H1 (cell line): ENCODE measurements at regions of chr14 and their contacts with region 1.

Region 1: DNA sequence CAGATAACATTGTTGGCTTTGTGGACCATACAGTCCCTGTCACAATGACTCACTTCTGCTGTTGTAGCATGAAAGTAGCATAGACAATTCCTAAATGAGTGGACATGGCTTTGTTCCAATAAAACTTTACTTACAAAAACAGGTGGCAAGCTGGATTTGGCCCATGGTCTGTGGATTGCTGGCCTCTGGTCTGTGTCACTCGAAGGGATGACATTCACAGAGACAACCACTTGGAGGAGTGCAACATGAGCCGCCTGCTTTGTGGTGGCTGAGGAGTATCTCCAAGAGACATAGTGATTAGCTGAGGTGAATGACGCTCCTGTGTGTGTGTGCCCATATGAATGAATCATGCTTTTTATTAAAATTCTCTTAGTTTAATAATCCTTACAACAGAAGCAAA is 81.3 kb upstream of the NRXN3 start:
- DNase-seq: no peak
- H3K4me3 ChIP-seq: no peak overlapping the region
- H3K27ac ChIP-seq: no peak overlapping the region
- H3K4me1 ChIP-seq: peaks cover 0 to 10% (median 6%) of the 10 kb centered on the region in 4 experiments; a peak in 4 of 7 replicates
- H3K27me3 ChIP-seq: no peaks in the 10 kb centered on the region
- CTCF ChIP-seq: peak in 1 of 3 experiments; percentile 14; a peak in 1 of 4 replicates
- EP300 ChIP-seq: no peak
- POLR2A ChIP-seq: no peak
- RAD21 ChIP-seq: peak in 1 of 2 experiments; percentile 32; a peak in 1 of 4 replicates

Region 2: DNA sequence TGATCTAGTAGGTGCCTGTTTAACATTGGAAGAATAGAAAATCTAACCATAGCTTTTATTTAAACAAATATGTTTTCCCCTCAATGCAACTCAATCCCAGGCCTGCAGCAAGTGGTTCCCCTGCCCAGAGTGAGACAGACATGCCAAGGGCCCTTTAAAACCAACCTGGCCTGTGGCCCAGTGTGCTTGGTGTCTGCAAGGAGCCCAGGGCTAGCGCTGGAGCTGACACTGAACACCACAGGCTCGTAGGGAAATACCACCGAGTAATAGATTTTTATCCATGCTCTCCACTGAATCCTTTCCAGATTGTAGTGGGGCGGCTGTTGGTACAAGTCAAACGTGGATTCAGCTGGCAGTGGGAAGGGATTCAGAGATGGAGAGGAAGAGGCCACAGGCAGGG is 14.4 kb before region 1 on chr14:
- CTCF ChIA-PET with region 1: interaction called, 10 read pairs
- POLR2A ChIA-PET with region 1: no interaction called
- DNase-seq: no peak
- H3K4me3 ChIP-seq: no peak overlapping the region
- H3K27ac ChIP-seq: no peak overlapping the region
- H3K4me1 ChIP-seq: no peaks in the 10 kb centered on the region
- H3K27me3 ChIP-seq: no peaks in the 10 kb centered on the region
- CTCF ChIP-seq: no peak
- EP300 ChIP-seq: no peak
- POLR2A ChIP-seq: no peak
- RAD21 ChIP-seq: no peak

Region 3: DNA sequence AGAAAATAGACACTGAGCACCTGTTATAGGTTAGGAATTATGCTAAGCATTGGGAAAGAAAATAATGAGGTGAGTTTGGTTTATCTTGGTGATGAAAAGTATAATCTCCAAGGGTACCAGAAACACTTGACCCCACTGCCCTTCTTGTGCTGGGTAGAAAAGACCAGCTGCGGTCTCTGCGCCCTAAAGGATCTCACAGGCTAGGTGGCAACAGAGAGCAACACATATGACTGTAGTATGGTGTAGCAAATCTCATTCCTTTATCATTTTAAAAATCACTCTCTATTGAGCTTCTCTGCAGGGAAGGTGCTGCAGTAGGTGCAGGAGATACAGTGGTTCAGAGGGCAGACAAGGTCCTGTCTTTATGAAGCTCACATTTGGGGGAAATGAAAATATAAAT is 107.4 kb after region 1 on chr14:
- CTCF ChIA-PET with region 1: no interaction called
- POLR2A ChIA-PET with region 1: no interaction called
- DNase-seq: no peak
- H3K4me3 ChIP-seq: no peak overlapping the region
- H3K27ac ChIP-seq: no peak overlapping the region
- H3K4me1 ChIP-seq: no peaks in the 10 kb centered on the region
- H3K27me3 ChIP-seq: no peaks in the 10 kb centered on the region
- CTCF ChIP-seq: peak in 2 of 3 experiments; percentile 19 to 37; a peak in 2 of 4 replicates
- EP300 ChIP-seq: no peak
- POLR2A ChIP-seq: no peak
- RAD21 ChIP-seq: peak; percentile 28 to 44